Natural killer cell (primary cell): ENCODE measurements at regions of chr17 and their contacts with region 1.

Region 1: GRCh38 chr17:80426681-80427326 is 11.8 kb downstream of the ENDOV start:
- DNase-seq: peak; percentile 88 to 94
- ATAC-seq: peak; percentile 96 to 97 (median 97)
- H3K4me3 ChIP-seq: no peak overlapping the region
- H3K4me3 Mint-ChIP-seq: no peak overlapping the region
- H3K27ac ChIP-seq: no peak overlapping the region
- H3K27ac Mint-ChIP-seq: peak overlapping the region in 1 of 2 donors; percentile 71
- H3K4me1 ChIP-seq: peaks cover 40% of the 10 kb centered on the region
- H3K4me1 Mint-ChIP-seq: peaks cover 6 to 16% of the 10 kb centered on the region in 2 donors
- H3K27me3 ChIP-seq: no peaks in the 10 kb centered on the region
- H3K27me3 Mint-ChIP-seq: no peaks in the 10 kb centered on the region
- CTCF ChIP-seq: peak; percentile 94

Region 2: GRCh38 chr17:80237351-80237750 is 189.5 kb before region 1 on chr17:
- intact Hi-C with region 1: no loop called
- DNase-seq: no peak
- ATAC-seq: no peak
- H3K4me3 ChIP-seq: no peak overlapping the region
- H3K4me3 Mint-ChIP-seq: no peak overlapping the region
- H3K27ac ChIP-seq: no peak overlapping the region
- H3K27ac Mint-ChIP-seq: no peak overlapping the region
- H3K4me1 ChIP-seq: no peaks in the 10 kb centered on the region
- H3K4me1 Mint-ChIP-seq: no peaks in the 10 kb centered on the region
- H3K27me3 ChIP-seq: no peaks in the 10 kb centered on the region
- H3K27me3 Mint-ChIP-seq: no peaks in the 10 kb centered on the region
- CTCF ChIP-seq: no peak

Region 3: GRCh38 chr17:80339118-80339517 is 87.7 kb before region 1 on chr17:
- intact Hi-C with region 1: no loop called
- DNase-seq: no peak
- ATAC-seq: peak in 1 of 3 donors; percentile 15
- H3K4me3 ChIP-seq: no peak overlapping the region
- H3K4me3 Mint-ChIP-seq: no peak overlapping the region
- H3K27ac ChIP-seq: no peak overlapping the region
- H3K27ac Mint-ChIP-seq: no peak overlapping the region
- H3K4me1 ChIP-seq: no peaks in the 10 kb centered on the region
- H3K4me1 Mint-ChIP-seq: peaks cover 2 to 11% of the 10 kb centered on the region in 2 donors
- H3K27me3 ChIP-seq: no peaks in the 10 kb centered on the region
- H3K27me3 Mint-ChIP-seq: no peaks in the 10 kb centered on the region
- CTCF ChIP-seq: no peak

Region 4: DNA sequence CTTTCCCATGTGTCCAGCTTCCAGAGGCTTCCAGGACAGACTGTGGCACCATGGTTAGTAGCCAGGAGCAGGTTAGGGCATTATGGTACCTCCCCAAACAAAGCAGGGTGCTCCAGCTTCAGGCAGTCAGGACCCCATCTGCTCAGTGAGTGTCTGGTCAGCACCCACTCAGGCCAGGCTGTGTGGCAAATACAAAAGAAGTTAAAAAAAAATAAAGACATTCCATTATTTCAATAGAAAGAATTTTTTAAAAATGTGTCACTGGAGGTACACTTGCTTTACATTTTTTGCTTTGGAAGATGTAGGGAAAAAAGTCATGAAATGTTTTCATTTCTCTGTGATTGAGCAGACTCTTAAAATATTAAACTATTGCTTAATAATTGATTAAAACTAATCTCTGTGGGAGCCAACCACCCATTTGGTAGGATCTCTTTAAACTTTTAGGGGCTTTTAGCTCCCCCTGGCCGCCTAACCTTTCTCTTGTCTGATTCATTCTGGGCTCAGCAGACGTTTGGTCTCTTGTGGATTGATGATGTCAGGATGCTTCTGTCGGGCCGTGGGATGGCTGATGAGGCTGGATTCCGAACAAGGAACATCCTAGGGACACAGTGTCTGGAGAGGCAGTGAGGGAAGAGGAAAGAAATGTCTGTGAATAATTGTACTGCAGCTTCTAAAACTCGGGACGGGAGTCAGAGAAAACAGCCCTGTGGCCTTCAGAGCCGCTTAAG is 78.0 kb after region 1 on chr17:
- intact Hi-C with region 1: loop called (anchors 1 kb)
- DNase-seq: peak in 1 of 2 donors; percentile 11
- ATAC-seq: no peak
- H3K4me3 ChIP-seq: no peak overlapping the region
- H3K4me3 Mint-ChIP-seq: no peak overlapping the region
- H3K27ac ChIP-seq: no peak overlapping the region
- H3K27ac Mint-ChIP-seq: no peak overlapping the region
- H3K4me1 ChIP-seq: no peaks in the 10 kb centered on the region
- H3K4me1 Mint-ChIP-seq: no peaks in the 10 kb centered on the region
- H3K27me3 ChIP-seq: peaks cover 3% of the 10 kb centered on the region
- H3K27me3 Mint-ChIP-seq: peaks cover 0 to 11% of the 10 kb centered on the region in 2 donors
- CTCF ChIP-seq: no peak

Region 5: DNA sequence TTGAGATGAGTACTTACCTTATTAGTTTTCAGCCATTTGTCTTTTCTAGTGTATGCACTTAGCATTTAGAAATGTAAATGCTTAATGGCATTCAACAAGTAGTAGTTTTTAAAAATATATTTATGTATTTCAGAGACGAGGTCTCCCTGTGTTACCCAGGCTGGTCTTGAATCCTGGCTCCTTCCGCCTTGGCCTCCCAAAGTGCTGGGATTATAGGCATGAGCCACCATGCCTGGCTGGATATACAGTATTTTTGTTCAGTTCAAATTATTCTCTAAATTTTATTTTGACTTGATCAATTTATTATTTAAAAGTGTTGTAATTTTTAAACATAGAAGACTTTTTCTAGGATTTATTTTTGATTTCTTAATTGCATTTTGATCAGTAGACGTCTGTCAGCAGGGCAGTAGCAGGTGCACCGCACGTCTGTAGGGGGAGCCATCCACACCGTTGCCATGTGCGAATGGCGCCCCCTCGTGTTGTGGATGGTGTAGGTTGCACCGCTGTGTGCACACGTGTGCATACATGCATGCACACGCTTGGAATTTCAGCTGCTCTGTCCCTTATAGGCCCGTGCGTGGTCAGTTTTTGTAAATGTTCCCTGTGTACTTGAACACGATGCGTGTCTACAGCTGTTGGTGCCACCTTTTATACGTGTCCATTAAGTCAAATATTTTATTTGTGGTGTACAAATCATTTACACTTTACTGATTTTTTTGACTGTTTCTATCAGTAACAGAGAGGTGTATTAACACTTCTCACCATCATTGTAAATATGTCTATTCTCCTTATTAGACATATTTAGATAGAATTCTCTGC is 148.5 kb after region 1 on chr17:
- intact Hi-C with region 1: loop called (anchors 1 kb)
- DNase-seq: peak; percentile 90 to 96
- ATAC-seq: peak; percentile 100
- H3K4me3 ChIP-seq: no peak overlapping the region
- H3K4me3 Mint-ChIP-seq: no peak overlapping the region
- H3K27ac ChIP-seq: no peak overlapping the region
- H3K27ac Mint-ChIP-seq: no peak overlapping the region
- H3K4me1 ChIP-seq: no peaks in the 10 kb centered on the region
- H3K4me1 Mint-ChIP-seq: peaks cover 8 to 9% of the 10 kb centered on the region in 2 donors
- H3K27me3 ChIP-seq: no peaks in the 10 kb centered on the region
- H3K27me3 Mint-ChIP-seq: no peaks in the 10 kb centered on the region
- CTCF ChIP-seq: peak; percentile 100

Region 6: DNA sequence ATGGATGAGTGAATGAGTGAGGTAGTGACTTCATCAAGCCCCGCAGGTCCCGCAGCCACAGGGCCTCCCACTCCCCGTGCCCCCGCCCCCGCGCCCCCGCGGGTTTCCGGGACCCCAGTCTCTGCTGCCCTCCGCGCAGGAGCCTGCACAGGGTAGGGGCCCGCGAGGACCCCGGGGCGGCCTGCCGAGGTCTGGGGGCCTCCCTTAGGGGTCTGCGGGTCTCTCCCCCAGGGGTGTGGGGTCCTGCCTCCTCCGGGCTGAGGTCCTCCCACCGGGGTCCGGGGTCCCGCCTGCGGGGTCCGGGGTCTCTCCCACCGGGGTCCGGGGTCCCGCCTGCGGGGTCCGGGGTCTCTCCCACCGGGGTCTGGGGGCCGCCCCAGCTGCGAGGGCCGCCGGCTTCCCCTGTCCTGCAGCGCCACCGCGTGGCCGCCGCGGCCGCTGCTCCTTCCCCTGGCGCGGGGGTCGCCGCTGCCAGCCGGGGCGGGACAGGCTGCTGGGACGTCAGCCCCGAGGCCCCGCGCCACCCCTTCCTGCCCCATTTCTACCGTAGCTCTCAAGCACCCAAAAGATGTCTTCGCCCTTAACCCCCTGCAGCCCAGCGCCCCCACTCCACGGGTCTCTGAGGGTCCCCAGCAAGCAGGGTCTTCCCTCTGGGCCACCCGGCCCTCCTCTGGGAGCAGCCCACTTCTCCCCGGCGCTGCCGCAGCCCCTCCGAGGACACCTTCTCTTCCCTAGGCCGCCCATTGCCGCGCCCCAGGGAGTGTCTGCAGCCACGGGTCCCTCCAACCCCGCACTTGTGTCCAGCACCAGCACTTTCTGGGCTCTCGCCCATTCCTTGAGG is 554.5 kb after region 1 on chr17:
- intact Hi-C with region 1: loop called (anchors 2 kb)
- DNase-seq: peak; percentile 54 to 72
- ATAC-seq: peak; percentile 54 to 79 (median 78)
- H3K4me3 ChIP-seq: no peak overlapping the region
- H3K4me3 Mint-ChIP-seq: no peak overlapping the region
- H3K27ac ChIP-seq: no peak overlapping the region
- H3K27ac Mint-ChIP-seq: peak overlapping the region in 1 of 2 donors; percentile 3
- H3K4me1 ChIP-seq: peaks cover 4% of the 10 kb centered on the region
- H3K4me1 Mint-ChIP-seq: peaks cover 0 to 14% of the 10 kb centered on the region in 2 donors
- H3K27me3 ChIP-seq: peaks cover 4% of the 10 kb centered on the region
- H3K27me3 Mint-ChIP-seq: peaks cover 10 to 11% of the 10 kb centered on the region in 2 donors
- CTCF ChIP-seq: peak; percentile 95

Region 7: DNA sequence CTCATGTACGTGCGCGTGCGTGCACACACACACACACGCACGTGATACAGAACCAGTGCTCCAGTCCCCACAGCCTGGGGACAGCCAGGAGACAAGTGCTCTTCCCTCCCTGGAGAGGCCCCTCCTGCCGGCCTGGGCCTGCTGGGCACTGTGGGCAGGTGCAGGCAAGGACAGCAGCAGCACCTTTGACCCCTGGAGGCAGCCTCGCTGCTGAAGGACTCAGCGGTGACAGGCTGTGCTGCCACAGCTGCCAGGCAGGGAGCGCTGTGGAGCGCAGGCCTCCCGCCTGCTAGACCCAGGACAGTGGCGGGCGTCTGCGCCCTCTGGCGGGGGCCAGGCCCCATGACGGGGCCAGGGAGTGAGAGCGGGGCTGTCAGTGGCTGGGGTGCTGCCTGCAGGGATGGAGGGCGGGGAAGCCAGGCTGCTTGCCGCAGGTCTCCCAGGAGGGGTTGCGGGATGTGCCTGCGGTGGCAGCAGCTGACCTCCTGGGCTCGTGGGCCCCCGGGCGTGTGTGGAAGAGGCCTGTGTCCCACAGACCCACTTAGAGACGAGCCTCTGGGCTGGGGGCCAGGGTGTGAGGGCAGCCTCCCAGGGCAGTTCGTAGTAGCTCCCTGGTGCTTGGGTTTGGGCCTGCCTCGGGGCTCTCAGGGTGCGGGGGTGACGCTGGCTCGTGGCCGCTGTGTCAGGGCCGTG is 675.0 kb after region 1 on chr17:
- intact Hi-C with region 1: loop called (anchors 10 kb)
- DNase-seq: peak; percentile 87 to 94
- ATAC-seq: peak; percentile 99 to 100 (median 99)
- H3K4me3 ChIP-seq: no peak overlapping the region
- H3K4me3 Mint-ChIP-seq: no peak overlapping the region
- H3K27ac ChIP-seq: no peak overlapping the region
- H3K27ac Mint-ChIP-seq: no peak overlapping the region
- H3K4me1 ChIP-seq: peaks cover 22% of the 10 kb centered on the region
- H3K4me1 Mint-ChIP-seq: peaks cover 0 to 8% of the 10 kb centered on the region in 2 donors
- H3K27me3 ChIP-seq: no peaks in the 10 kb centered on the region
- H3K27me3 Mint-ChIP-seq: no peaks in the 10 kb centered on the region
- CTCF ChIP-seq: peak; percentile 100